ENCODE measurements at regions of chr13 and their contacts with region 1.

Region 1: GRCh38 chr13:99606324-99607066 is 105.2 kb downstream of the TM9SF2 start:
- DNase-seq: peak; percentile 72 to 85
- H3K4me3 ChIP-seq: peak within 1 kb of the TSS; percentile 84
- H3K27ac ChIP-seq: peak within 1 kb of the TSS; percentile 59
- H3K4me1 ChIP-seq: 0 out of 2 replicates have a peak, but pooled peaks cover 6% of the 10 kb centered on the region
- H3K27me3 ChIP-seq: no peaks in the 10 kb centered on the region
- CTCF ChIP-seq: no peak

Region 2: GRCh38 chr13:99393791-99394735 is 212.4 kb before region 1 on chr13:
- CTCF ChIA-PET with region 1: no interaction called
- POLR2A ChIA-PET with region 1: no interaction called
- intact Hi-C with region 1: no loop called
- DNase-seq: no peak
- H3K4me3 ChIP-seq: no peak overlapping the region
- H3K27ac ChIP-seq: no peak overlapping the region
- H3K4me1 ChIP-seq: no peaks in the 10 kb centered on the region
- H3K27me3 ChIP-seq: no peaks in the 10 kb centered on the region
- CTCF ChIP-seq: no peak

Region 3: DNA sequence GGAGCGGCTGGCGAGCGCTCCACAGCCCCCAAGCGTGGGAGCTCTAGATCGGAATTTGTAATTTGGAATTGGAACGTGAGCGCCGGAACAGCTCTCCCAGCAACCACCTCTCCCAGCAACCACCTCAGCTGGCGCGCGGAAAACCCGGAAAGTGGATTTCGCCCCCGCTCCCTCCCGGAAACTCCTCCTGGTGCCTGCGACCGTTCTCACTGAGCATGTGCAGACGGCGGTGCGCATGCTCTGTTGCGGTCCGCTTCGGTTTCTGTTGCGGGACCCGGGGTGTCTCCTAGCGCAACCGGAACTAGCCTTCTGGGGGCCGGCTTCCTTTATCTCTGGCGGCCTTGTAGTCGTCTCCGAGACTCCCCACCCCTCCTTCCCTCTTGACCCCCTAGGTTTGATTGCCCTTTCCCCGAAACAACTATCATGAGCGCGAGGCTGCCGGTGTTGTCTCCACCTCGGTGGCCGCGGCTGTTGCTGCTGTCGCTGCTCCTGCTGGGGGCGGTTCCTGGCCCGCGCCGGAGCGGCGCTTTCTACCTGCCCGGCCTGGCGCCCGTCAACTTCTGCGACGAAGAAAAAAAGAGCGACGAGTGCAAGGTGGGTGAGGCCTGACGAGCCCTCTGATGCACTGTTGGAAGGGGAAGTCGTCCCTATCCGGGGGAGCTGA is 105.2 kb before region 1 on chr13 and contains the start of gene TM9SF2:
- CTCF ChIA-PET with region 1: no interaction called
- POLR2A ChIA-PET with region 1: no interaction called
- intact Hi-C with region 1: loop called (anchors 2 kb)
- DNase-seq: peak; percentile 94 to 98
- H3K4me3 ChIP-seq: peak within 1 kb of the TSS; percentile 79
- H3K27ac ChIP-seq: peak within 1 kb of the TSS; percentile 72
- H3K4me1 ChIP-seq: peaks cover 66% of the 10 kb centered on the region
- H3K27me3 ChIP-seq: no peaks in the 10 kb centered on the region
- CTCF ChIP-seq: no peak
- total RNA-seq, gene TM9SF2: 66.5 and 87.0 TPM in 2 replicates

Region 4: GRCh38 chr13:99709134-99709533 is 102.6 kb after region 1 on chr13:
- CTCF ChIA-PET with region 1: no interaction called
- POLR2A ChIA-PET with region 1: interaction called, 11 read pairs
- intact Hi-C with region 1: no loop called
- DNase-seq: no peak
- H3K4me3 ChIP-seq: no peak overlapping the region
- H3K27ac ChIP-seq: no peak overlapping the region
- H3K4me1 ChIP-seq: no peaks in the 10 kb centered on the region
- H3K27me3 ChIP-seq: no peaks in the 10 kb centered on the region
- CTCF ChIP-seq: no peak

Region 5: GRCh38 chr13:100434010-100434763 is 827.7 kb after region 1 on chr13:
- CTCF ChIA-PET with region 1: no interaction called
- POLR2A ChIA-PET with region 1: interaction called, 12 read pairs
- intact Hi-C with region 1: no loop called
- DNase-seq: peak; percentile 50 to 79
- H3K4me3 ChIP-seq: no peak overlapping the region
- H3K27ac ChIP-seq: peak overlapping the region; percentile 80
- H3K4me1 ChIP-seq: peaks cover 26% of the 10 kb centered on the region
- H3K27me3 ChIP-seq: no peaks in the 10 kb centered on the region
- CTCF ChIP-seq: no peak

Measured in PC-9 (cell line).